Activated B cell treated with CpG ODN at 0.5 μM for 24 hours (primary cell): ENCODE measurements at regions of chr17 and their contacts with region 1.

Region 1: DNA sequence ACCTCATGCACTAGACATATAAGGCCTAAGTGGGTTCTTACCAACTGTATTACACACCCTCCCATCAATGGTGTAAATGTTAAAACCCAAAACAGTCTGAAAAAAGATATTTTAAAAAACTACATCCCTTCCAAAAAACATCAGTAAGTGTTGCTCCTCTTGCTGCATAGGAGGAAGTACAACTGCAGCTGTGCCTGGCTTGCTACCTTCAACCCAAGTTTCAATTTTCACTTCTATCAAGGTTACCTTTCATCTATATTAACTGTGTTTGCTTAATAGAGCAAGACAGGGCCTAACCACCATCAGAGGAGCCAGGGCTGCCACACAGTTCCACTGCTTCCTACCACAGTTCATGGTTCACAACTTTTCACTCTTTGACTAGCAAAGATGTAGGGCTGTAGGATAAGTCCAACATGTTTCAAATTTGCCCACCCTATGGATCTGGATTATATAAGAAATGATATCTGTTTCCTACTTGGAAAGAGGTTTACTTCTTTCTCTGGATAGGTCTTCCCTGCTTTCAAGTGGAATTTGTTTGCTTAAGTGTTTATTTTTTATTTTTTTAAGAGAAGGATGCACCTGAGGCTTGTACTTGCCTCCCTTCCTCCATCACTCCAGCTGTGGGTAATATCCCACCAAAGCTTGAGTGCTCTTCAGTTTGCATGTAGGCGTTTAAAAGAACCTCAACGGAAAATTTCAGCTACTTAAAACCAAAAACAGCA is 56.7 kb downstream of the GRB7 start:
- DNase-seq: no peak
- ATAC-seq: peak; percentile 94
- H3K4me3 Mint-ChIP-seq: peak overlapping the region; percentile 66
- H3K27ac Mint-ChIP-seq: peak overlapping the region; percentile 93
- H3K4me1 Mint-ChIP-seq: peaks cover 85% of the 10 kb centered on the region
- H3K27me3 Mint-ChIP-seq: no peaks in the 10 kb centered on the region
- CTCF ChIP-seq: no peak

Region 2: DNA sequence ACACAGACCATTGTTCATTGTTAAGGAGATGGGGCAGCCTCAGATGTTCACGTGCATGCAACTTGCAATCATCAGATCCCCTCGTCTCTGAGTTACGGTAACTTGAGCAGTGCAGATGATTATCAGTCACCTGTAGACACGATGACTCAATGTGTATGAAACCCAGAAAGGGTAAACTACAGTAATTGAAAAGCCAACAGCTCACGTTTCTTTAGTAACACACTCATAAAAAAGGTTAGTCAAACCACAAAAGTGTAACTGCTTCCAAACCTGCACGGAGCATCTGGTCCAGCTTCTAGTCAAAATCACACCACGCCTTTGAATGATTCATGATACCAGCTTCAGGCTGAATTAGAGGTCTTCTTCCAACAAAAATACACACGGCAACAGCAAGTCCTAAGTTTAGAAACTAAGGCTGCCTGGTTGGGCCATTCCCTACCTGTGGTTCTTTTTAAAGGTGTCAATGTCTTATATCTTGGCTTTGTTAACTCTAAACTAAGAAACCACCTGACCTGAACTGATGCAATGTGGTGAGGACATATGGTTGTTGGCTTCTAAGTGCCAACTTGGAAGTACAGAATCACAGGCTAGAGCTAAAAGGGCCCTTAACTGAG is 24.3 kb before region 1 on chr17:
- CTCF ChIA-PET with region 1: no interaction called
- POLR2A ChIA-PET with region 1: interaction called, 67 read pairs
- intact Hi-C with region 1: no loop called
- DNase-seq: no peak
- ATAC-seq: peak; percentile 68
- H3K4me3 Mint-ChIP-seq: peak overlapping the region; percentile 58
- H3K27ac Mint-ChIP-seq: peak overlapping the region; percentile 96
- H3K4me1 Mint-ChIP-seq: peaks cover 99% of the 10 kb centered on the region
- H3K27me3 Mint-ChIP-seq: no peaks in the 10 kb centered on the region
- CTCF ChIP-seq: no peak

Region 3: GRCh38 chr17:39777534-39778365 is 16.7 kb before region 1 on chr17:
- CTCF ChIA-PET with region 1: interaction called, 8 read pairs
- POLR2A ChIA-PET with region 1: interaction called, 67 read pairs
- intact Hi-C with region 1: loop called (anchors 1 kb)
- DNase-seq: no peak
- ATAC-seq: peak; percentile 44
- H3K4me3 Mint-ChIP-seq: peak overlapping the region; percentile 88
- H3K27ac Mint-ChIP-seq: peak overlapping the region; percentile 96
- H3K4me1 Mint-ChIP-seq: peaks cover 93% of the 10 kb centered on the region
- H3K27me3 Mint-ChIP-seq: no peaks in the 10 kb centered on the region
- CTCF ChIP-seq: no peak

Region 4: GRCh38 chr17:39808409-39808997 is 14.1 kb after region 1 on chr17:
- CTCF ChIA-PET with region 1: interaction called, 3 read pairs
- POLR2A ChIA-PET with region 1: interaction called, 16 read pairs
- intact Hi-C with region 1: no loop called
- DNase-seq: no peak
- ATAC-seq: no peak
- H3K4me3 Mint-ChIP-seq: peak overlapping the region; percentile 12
- H3K27ac Mint-ChIP-seq: peak overlapping the region; percentile 74
- H3K4me1 Mint-ChIP-seq: peaks cover 75% of the 10 kb centered on the region
- H3K27me3 Mint-ChIP-seq: no peaks in the 10 kb centered on the region
- CTCF ChIP-seq: no peak

Region 5: DNA sequence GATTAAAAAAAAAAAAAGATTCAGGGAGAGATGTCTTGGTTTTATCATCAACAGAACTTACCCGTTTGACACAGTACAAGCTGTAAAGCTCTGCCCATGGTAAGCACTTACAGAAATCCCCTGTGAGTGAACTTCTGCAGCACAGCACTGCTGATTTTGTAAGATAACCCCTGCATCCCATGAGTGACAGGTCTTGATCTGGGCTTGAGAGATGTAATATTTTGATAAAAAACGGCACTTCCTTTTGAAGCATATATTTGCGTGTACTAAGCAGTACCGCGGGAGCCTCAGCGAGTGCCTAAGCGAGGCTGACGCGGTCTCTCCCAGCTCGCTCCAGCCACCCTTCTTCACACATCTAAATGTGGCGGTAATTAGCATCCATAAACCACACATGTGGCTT is 19.2 kb after region 1 on chr17:
- CTCF ChIA-PET with region 1: interaction called, 3 read pairs
- POLR2A ChIA-PET with region 1: interaction called, 33 read pairs
- intact Hi-C with region 1: loop called (anchors 2 kb)
- DNase-seq: no peak
- ATAC-seq: peak; percentile 52
- H3K4me3 Mint-ChIP-seq: peak overlapping the region; percentile 32
- H3K27ac Mint-ChIP-seq: peak overlapping the region; percentile 77
- H3K4me1 Mint-ChIP-seq: peaks cover 79% of the 10 kb centered on the region
- H3K27me3 Mint-ChIP-seq: no peaks in the 10 kb centered on the region
- CTCF ChIP-seq: no peak

Region 6: DNA sequence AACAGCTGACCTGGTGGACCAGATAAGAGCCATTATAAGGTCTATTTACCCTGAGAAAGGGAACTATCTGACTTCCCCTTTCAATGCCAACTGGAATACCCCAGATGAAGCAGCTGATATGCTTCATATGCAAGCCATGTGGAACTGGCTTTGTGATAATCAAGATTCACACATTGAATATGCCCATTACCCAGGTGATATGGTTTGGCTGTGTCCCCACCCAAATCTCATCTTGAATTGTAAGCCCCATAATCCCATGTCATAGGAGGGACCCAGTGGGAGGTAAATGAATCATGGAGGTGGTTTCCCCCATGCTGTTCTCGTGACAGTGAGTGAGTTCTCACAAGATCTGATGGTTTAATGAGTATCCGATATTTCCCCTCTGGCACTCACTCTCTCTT is 27.6 kb after region 1 on chr17:
- CTCF ChIA-PET with region 1: no interaction called
- POLR2A ChIA-PET with region 1: interaction called, 33 read pairs
- intact Hi-C with region 1: loop called (anchors 2 kb)
- DNase-seq: no peak
- ATAC-seq: peak; percentile 70
- H3K4me3 Mint-ChIP-seq: peak overlapping the region; percentile 45
- H3K27ac Mint-ChIP-seq: peak overlapping the region; percentile 95
- H3K4me1 Mint-ChIP-seq: peaks cover 65% of the 10 kb centered on the region
- H3K27me3 Mint-ChIP-seq: no peaks in the 10 kb centered on the region
- CTCF ChIP-seq: no peak